Activated CD4-positive, alpha-beta memory T cell treated with anti-CD3 and anti-CD28 coated beads for 36 hours (primary cell): ENCODE measurements at regions of chr6 and their contacts with region 1.

Region 1: DNA sequence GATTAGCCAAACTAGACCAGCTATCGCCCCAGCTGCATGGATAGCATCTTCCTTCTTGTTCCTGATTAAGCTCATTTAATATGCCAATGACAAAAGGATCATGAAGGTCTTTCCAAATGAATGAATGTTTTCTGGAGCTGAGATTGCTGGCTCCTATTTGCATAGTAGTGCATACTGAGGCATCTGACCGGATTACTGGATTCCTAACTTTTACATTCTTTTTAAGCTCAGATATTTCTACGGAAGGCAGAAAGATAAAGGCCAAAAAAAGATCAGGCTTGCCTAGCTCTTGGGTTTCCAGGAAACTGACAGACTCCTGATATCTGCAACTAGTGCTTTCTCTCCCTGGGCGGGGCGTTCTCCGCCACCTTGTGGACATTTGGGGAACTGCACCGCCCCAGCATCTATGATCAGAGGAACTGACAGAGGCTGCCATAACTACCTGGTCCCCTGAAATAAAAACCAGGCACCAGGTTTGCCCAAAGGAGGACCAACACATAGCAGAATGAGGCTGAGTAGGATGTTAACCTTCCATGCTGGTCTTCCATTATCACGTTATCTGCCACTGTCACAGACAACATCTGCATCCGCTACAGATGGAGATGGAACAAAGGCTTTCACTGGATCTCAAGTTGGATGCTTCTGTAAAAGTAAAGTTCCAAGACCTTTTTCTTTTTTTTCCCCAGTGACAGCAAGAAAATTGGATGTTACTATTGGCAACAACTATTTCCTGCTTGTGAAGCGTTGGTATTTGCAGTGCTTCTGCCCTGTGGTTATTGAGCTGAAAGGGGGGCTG is 33.2 kb downstream of the NT5E start:
- DNase-seq: peak; percentile 87
- H3K4me3 Mint-ChIP-seq: no peak overlapping the region
- H3K27ac Mint-ChIP-seq: no peak overlapping the region
- H3K4me1 Mint-ChIP-seq: peaks cover 7% of the 10 kb centered on the region
- H3K27me3 Mint-ChIP-seq: peaks cover 5% of the 10 kb centered on the region

Region 2: DNA sequence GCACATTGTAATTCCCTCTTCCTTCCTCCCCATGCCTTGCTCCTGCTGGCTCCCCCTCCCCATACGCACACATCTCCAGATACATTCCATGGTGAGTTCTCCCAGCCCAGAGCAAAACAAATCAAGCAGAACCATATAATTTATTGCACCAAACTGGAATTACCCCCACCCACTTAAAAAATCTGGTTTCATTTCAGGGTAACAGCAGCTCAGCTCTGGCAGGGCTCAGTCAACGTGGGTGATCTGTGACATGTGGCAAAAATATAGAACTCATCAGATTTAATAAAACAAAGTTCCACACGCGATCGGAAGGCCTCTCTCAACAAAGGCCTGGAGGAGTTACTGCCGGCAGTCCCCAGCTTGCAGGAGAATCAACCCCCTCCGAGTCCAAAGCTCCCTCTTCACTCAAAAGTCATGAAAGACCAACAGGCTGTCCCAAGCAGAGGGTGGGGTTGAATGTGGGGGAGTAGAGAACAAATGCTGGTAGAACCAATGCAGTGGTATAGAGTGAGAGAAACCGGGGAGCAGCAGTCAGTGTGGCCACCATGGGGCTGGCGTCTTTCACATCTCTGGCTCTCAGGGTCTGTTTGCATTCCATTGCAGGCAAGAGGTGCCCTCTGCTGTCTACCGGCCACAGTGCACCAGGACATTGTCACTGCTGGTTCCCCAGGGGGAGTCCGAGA is 356.5 kb before region 1 on chr6:
- CTCF ChIA-PET with region 1: no interaction called
- POLR2A ChIA-PET with region 1: no interaction called
- intact Hi-C with region 1: no loop called
- DNase-seq: peak; percentile 13
- H3K4me3 Mint-ChIP-seq: no peak overlapping the region
- H3K27ac Mint-ChIP-seq: no peak overlapping the region
- H3K4me1 Mint-ChIP-seq: no peaks in the 10 kb centered on the region
- H3K27me3 Mint-ChIP-seq: no peaks in the 10 kb centered on the region

Region 3: GRCh38 chr6:85354761-85355618 is 128.1 kb before region 1 on chr6:
- CTCF ChIA-PET with region 1: interaction called, 103 read pairs
- POLR2A ChIA-PET with region 1: no interaction called
- intact Hi-C with region 1: loop called (anchors 1 kb)
- DNase-seq: peak; percentile 71
- H3K4me3 Mint-ChIP-seq: no peak overlapping the region
- H3K27ac Mint-ChIP-seq: no peak overlapping the region
- H3K4me1 Mint-ChIP-seq: no peaks in the 10 kb centered on the region
- H3K27me3 Mint-ChIP-seq: peaks cover 5% of the 10 kb centered on the region

Region 4: GRCh38 chr6:85372188-85372914 is 110.8 kb before region 1 on chr6:
- CTCF ChIA-PET with region 1: interaction called, 17 read pairs
- POLR2A ChIA-PET with region 1: no interaction called
- intact Hi-C with region 1: no loop called
- DNase-seq: no peak
- H3K4me3 Mint-ChIP-seq: no peak overlapping the region
- H3K27ac Mint-ChIP-seq: no peak overlapping the region
- H3K4me1 Mint-ChIP-seq: no peaks in the 10 kb centered on the region
- H3K27me3 Mint-ChIP-seq: peaks cover 6% of the 10 kb centered on the region

Region 5: DNA sequence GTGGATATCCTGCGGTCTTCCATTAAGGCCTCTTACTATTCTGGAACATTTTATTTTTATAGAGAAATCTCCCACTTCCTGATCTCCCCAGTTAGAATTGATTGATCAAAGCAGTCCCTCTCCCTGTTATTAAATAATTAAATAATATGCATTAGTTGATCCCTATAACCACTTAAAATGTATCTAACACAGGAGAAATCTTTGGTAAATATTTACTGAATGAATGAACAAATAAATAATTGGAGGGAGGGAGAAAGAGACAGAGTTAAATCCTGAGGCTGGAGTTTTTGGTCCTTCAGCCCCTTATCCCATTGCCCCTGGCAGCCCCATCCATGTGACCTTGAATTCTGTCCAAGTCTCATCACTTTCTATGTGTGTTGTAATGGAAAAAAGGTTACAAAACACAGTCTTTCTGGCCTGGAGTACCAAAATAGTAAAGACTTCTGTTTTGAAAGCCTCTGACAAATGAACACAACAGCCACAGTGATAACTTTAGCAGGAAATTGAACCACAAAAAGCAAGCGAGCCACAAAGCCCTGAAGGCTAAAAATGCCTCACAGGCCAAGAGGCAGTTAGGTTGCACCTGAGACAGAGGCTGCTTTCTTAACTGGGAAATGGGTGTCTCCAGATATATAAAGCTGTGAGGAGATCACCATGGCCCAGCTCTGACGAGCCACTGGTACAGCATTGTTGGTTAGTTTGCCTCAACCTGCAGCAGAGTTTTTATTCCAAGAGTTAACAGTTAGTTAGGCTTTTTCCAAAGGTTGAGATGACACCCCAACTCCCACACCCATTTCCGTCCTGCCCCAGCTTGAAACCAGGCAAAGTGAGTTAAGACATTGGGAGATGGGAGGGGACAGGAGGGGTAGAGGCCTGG is 21.9 kb before region 1 on chr6:
- CTCF ChIA-PET with region 1: interaction called, 37 read pairs
- POLR2A ChIA-PET with region 1: interaction called, 4 read pairs
- intact Hi-C with region 1: loop called (anchors 1 kb)
- DNase-seq: peak; percentile 60
- H3K4me3 Mint-ChIP-seq: no peak overlapping the region
- H3K27ac Mint-ChIP-seq: peak overlapping the region; percentile 72
- H3K4me1 Mint-ChIP-seq: peaks cover 55% of the 10 kb centered on the region
- H3K27me3 Mint-ChIP-seq: peaks cover 21% of the 10 kb centered on the region

Region 6: GRCh38 chr6:85498596-85499258 is 15.6 kb after region 1 on chr6:
- CTCF ChIA-PET with region 1: interaction called, 92 read pairs
- POLR2A ChIA-PET with region 1: no interaction called
- intact Hi-C with region 1: no loop called
- DNase-seq: no peak
- H3K4me3 Mint-ChIP-seq: no peak overlapping the region
- H3K27ac Mint-ChIP-seq: no peak overlapping the region
- H3K4me1 Mint-ChIP-seq: peaks cover 20% of the 10 kb centered on the region
- H3K27me3 Mint-ChIP-seq: no peaks in the 10 kb centered on the region

Region 7: DNA sequence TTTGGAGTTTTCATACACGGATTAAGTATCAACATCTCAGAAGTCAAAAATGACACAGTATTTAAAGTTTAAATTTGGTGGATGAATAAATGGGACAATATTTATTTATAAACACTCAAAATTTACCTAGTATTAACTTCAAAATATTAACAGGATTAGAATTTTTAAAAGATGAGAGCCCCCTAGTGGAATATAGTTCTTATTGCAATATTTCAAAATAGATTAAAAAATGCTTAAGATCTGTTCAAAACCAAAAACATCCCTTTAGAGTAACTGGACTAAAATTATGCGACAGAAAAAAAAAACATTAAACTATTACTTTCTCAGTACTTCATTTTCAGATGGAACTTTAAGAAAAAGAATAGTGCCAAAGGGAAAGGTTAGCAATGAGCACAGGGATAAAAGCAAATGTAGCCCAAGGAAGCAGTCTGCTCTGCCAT is 54.0 kb after region 1 on chr6:
- CTCF ChIA-PET with region 1: interaction called, 15 read pairs
- POLR2A ChIA-PET with region 1: no interaction called
- intact Hi-C with region 1: no loop called
- DNase-seq: no peak
- H3K4me3 Mint-ChIP-seq: no peak overlapping the region
- H3K27ac Mint-ChIP-seq: no peak overlapping the region
- H3K4me1 Mint-ChIP-seq: no peaks in the 10 kb centered on the region
- H3K27me3 Mint-ChIP-seq: no peaks in the 10 kb centered on the region